CD8-positive, alpha-beta memory T cell (primary cell): ENCODE measurements at regions of chr11 and their contacts with region 1.

Region 1: GRCh38 chr11:68843703-68844312 is 2.1 kb upstream of the CPT1A start:
- DNase-seq: peak; percentile 56 to 78 (median 66)
- H3K4me3 ChIP-seq: peak overlapping the region; percentile 76
- H3K4me3 Mint-ChIP-seq: peak overlapping the region; percentile 81 to 98 (median 93)
- H3K27ac ChIP-seq: peak overlapping the region; percentile 27
- H3K27ac Mint-ChIP-seq: peak overlapping the region; percentile 80 to 98 (median 90)
- H3K4me1 ChIP-seq: peaks cover 28% of the 10 kb centered on the region
- H3K4me1 Mint-ChIP-seq: peaks cover 31 to 41% (median 39%) of the 10 kb centered on the region in 3 donors
- H3K27me3 ChIP-seq: no peaks in the 10 kb centered on the region
- H3K27me3 Mint-ChIP-seq: peaks cover 0 to 3% of the 10 kb centered on the region in 2 donors

Region 2: DNA sequence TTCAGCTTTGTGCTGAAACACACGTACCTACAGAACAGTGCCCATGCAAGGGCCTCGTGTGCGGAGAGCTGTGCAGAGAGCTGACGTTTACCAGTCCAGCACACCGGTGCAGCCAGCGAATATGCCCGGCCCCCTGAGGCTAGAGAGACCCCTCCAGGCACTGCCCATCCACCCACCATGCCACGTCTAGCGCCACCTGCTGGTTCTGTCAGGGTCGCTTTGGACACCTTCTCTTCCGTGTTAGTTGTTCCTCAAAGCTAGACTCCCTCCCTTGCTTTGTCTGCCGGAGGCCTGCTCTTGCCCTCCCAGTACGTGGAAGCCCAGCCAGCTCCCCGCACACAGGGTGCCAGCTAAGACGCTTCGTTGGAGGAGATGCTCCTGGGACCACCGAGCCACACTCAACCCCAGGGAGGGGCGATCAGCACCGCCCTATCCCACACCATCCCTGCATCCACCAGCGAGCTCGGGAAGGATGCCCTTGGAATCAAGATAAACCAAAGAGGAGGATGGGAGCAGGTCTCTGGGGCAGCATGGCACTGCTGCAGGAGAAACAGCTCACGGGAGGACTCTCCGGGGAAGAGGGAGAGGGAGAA is 45.5 kb before region 1 on chr11:
- CTCF ChIA-PET with region 1: interaction called, 10 read pairs
- POLR2A ChIA-PET with region 1: no interaction called
- DNase-seq: peak in 4 of 5 donors; percentile 13 to 58 (median 22)
- H3K4me3 ChIP-seq: no peak overlapping the region
- H3K4me3 Mint-ChIP-seq: no peak overlapping the region
- H3K27ac ChIP-seq: no peak overlapping the region
- H3K27ac Mint-ChIP-seq: no peak overlapping the region
- H3K4me1 ChIP-seq: no peaks in the 10 kb centered on the region
- H3K4me1 Mint-ChIP-seq: peaks cover 0 to 3% (median 0%) of the 10 kb centered on the region in 3 donors
- H3K27me3 ChIP-seq: no peaks in the 10 kb centered on the region
- H3K27me3 Mint-ChIP-seq: no peaks in the 10 kb centered on the region

Region 3: DNA sequence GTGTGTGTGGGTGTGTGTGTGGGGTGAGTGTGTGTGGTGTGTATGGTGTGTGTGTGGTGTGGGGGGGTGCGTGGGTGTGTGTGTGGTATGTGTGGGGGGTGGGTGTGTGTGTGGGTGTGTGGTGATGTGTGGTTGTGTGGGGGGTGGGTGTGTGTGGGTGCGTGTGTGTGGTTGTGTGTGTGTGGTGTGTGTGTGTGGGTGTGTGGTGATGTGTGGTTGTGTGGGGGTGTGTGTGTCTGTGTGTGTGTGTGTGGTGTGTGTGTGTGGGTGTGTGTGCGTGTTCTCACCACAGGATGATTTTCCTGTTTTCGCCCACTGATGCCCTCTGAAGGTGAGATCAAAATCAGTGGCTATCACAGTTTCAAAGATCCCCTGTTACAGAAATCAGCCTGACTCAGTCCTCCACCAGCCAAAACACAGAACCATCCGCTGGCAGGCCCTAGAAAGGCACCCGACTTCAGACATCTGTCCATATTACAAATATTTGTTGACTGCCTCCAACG is 26.8 kb before region 1 on chr11:
- CTCF ChIA-PET with region 1: interaction called, 11 read pairs
- POLR2A ChIA-PET with region 1: interaction called, 6 read pairs
- DNase-seq: no peak
- H3K4me3 ChIP-seq: no peak overlapping the region
- H3K4me3 Mint-ChIP-seq: peak overlapping the region in 5 of 7 donors; percentile 18 to 54 (median 41)
- H3K27ac ChIP-seq: no peak overlapping the region
- H3K27ac Mint-ChIP-seq: peak overlapping the region; percentile 60 to 95 (median 88)
- H3K4me1 ChIP-seq: peaks cover 16% of the 10 kb centered on the region
- H3K4me1 Mint-ChIP-seq: peaks cover 24 to 38% (median 38%) of the 10 kb centered on the region in 3 donors
- H3K27me3 ChIP-seq: no peaks in the 10 kb centered on the region
- H3K27me3 Mint-ChIP-seq: no peaks in the 10 kb centered on the region

Region 4: DNA sequence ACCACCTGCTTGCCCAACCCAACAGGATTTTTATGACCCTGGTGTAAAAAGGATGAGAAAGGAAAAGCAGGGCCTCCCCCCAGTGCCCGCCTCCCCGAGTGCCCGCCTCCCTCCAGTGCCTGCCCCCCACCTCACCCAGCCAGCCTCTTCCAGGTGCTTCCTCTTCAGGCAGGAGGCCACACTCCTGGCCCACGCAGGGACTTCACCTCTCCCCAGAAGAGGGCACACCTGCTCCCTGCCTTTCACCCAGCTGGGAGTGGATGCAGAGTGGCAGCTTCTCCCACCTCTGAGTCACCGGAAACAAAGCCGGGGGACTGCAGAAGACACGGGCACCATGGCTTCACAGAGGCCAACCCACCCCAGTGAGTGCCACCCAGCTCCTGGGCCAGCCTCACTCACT is 18.2 kb before region 1 on chr11:
- CTCF ChIA-PET with region 1: interaction called, 37 read pairs
- POLR2A ChIA-PET with region 1: interaction called, 8 read pairs
- DNase-seq: peak; percentile 23 to 74 (median 39)
- H3K4me3 ChIP-seq: no peak overlapping the region
- H3K4me3 Mint-ChIP-seq: no peak overlapping the region
- H3K27ac ChIP-seq: no peak overlapping the region
- H3K27ac Mint-ChIP-seq: peak overlapping the region in 4 of 8 donors; percentile 36 to 61 (median 46)
- H3K4me1 ChIP-seq: peaks cover 12% of the 10 kb centered on the region
- H3K4me1 Mint-ChIP-seq: peaks cover 33 to 62% (median 39%) of the 10 kb centered on the region in 3 donors
- H3K27me3 ChIP-seq: no peaks in the 10 kb centered on the region
- H3K27me3 Mint-ChIP-seq: no peaks in the 10 kb centered on the region

Region 5: GRCh38 chr11:68832476-68833181 is 11.2 kb before region 1 on chr11:
- CTCF ChIA-PET with region 1: interaction called, 37 read pairs
- POLR2A ChIA-PET with region 1: no interaction called
- DNase-seq: no peak
- H3K4me3 ChIP-seq: no peak overlapping the region
- H3K4me3 Mint-ChIP-seq: no peak overlapping the region
- H3K27ac ChIP-seq: no peak overlapping the region
- H3K27ac Mint-ChIP-seq: peak overlapping the region in 6 of 8 donors; percentile 7 to 84 (median 36)
- H3K4me1 ChIP-seq: peaks cover 25% of the 10 kb centered on the region
- H3K4me1 Mint-ChIP-seq: peaks cover 40 to 74% (median 50%) of the 10 kb centered on the region in 3 donors
- H3K27me3 ChIP-seq: no peaks in the 10 kb centered on the region
- H3K27me3 Mint-ChIP-seq: no peaks in the 10 kb centered on the region

Region 6: GRCh38 chr11:68855205-68855981 is 11.6 kb after region 1 on chr11:
- CTCF ChIA-PET with region 1: interaction called, 34 read pairs
- POLR2A ChIA-PET with region 1: interaction called, 4 read pairs
- DNase-seq: peak in 2 of 5 donors; percentile 17 to 22
- H3K4me3 ChIP-seq: peak overlapping the region; percentile 19
- H3K4me3 Mint-ChIP-seq: peak overlapping the region; percentile 34 to 84 (median 75)
- H3K27ac ChIP-seq: no peak overlapping the region
- H3K27ac Mint-ChIP-seq: no peak overlapping the region
- H3K4me1 ChIP-seq: peaks cover 13% of the 10 kb centered on the region
- H3K4me1 Mint-ChIP-seq: peaks cover 0 to 9% (median 4%) of the 10 kb centered on the region in 3 donors
- H3K27me3 ChIP-seq: peaks cover 12% of the 10 kb centered on the region
- H3K27me3 Mint-ChIP-seq: peaks cover 30 to 42% of the 10 kb centered on the region in 2 donors